H1 (cell line): ENCODE measurements at regions of chr1 and their contacts with region 1.

Region 1: GRCh38 chr1:116586741-116587143 is 15.9 kb upstream of the CD58 start:
- DNase-seq: no peak
- H3K4me3 ChIP-seq: no peak overlapping the region
- H3K27ac ChIP-seq: no peak overlapping the region
- H3K4me1 ChIP-seq: peaks cover 0 to 5% (median 0%) of the 10 kb centered on the region in 4 experiments; a peak in 3 of 7 replicates
- H3K27me3 ChIP-seq: no peaks in the 10 kb centered on the region
- CTCF ChIP-seq: no peak
- EP300 ChIP-seq: no peak
- POLR2A ChIP-seq: no peak
- RAD21 ChIP-seq: no peak

Region 2: GRCh38 chr1:116570358-116571200 is 16.2 kb before region 1 on chr1 and contains the start of gene CD58:
- CTCF ChIA-PET with region 1: interaction called, 26 read pairs
- POLR2A ChIA-PET with region 1: no interaction called
- DNase-seq: peak; percentile 65 to 86
- H3K4me3 ChIP-seq: peak within 1 kb of the TSS; percentile 64 to 83 (median 74)
- H3K27ac ChIP-seq: no peak within 1 kb of the TSS
- H3K4me1 ChIP-seq: peaks cover 0 to 19% (median 7%) of the 10 kb centered on the region in 4 experiments; a peak in 5 of 7 replicates
- H3K27me3 ChIP-seq: peaks cover 0 to 4% (median 0%) of the 10 kb centered on the region in 4 experiments; a peak in 1 of 7 replicates
- CTCF ChIP-seq: peak; percentile 66 to 84 (median 67)
- EP300 ChIP-seq: no peak
- POLR2A ChIP-seq: peak; percentile 54 to 68; a peak in 2 of 3 replicates
- RAD21 ChIP-seq: peak in 1 of 2 experiments; percentile 47; a peak in 1 of 4 replicates
- total RNA-seq, gene CD58: 5.5 and 6.0 TPM in 2 replicates

Region 3: DNA sequence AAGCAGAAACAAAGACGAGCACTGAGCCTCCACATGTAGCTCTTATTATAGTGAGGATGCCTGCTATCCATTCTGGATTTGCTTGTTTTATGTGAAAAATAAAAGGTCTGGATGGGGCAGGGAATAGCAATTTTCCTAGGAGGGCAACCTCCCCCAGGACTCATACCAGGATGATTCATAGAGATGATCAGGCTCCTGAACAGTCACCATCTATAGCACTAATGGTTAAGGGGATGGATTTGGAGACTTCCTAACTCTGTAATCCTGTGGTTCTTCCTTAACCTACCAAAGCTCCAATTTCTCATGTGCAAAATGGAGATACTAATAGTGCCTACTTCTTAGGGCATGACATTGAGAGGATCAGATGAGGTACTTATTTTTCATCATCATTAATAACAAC is 18.6 kb after region 1 on chr1:
- CTCF ChIA-PET with region 1: no interaction called
- POLR2A ChIA-PET with region 1: no interaction called
- DNase-seq: no peak
- H3K4me3 ChIP-seq: no peak overlapping the region
- H3K27ac ChIP-seq: no peak overlapping the region
- H3K4me1 ChIP-seq: peaks cover 0 to 5% (median 2%) of the 10 kb centered on the region in 4 experiments; a peak in 2 of 7 replicates
- H3K27me3 ChIP-seq: no peaks in the 10 kb centered on the region
- CTCF ChIP-seq: no peak
- EP300 ChIP-seq: no peak
- POLR2A ChIP-seq: no peak
- RAD21 ChIP-seq: no peak